Aorta (tissue), 5 donors: ENCODE measurements at regions of chr13 and their contacts with region 1.

Region 1: GRCh38 chr13:49436890-49437289 is 7.0 kb downstream of the CAB39L start:
- DNase-seq: peak; percentile 70 to 76
- ATAC-seq: peak; percentile 85
- H3K4me3 ChIP-seq: no peak overlapping the region
- H3K27ac ChIP-seq: no peak overlapping the region
- H3K4me1 ChIP-seq: no peaks in the 10 kb centered on the region
- H3K27me3 ChIP-seq: no peaks in the 10 kb centered on the region

Region 2: GRCh38 chr13:49300739-49301589 is 135.9 kb before region 1 on chr13:
- intact Hi-C with region 1: loop called (anchors 1 to 2 kb)
- DNase-seq: peak in 1 of 2 donors; percentile 65
- ATAC-seq: peak; percentile 85
- H3K4me3 ChIP-seq: no peak overlapping the region
- H3K27ac ChIP-seq: no peak overlapping the region
- H3K4me1 ChIP-seq: no peaks in the 10 kb centered on the region
- H3K27me3 ChIP-seq: no peaks in the 10 kb centered on the region

Region 3: GRCh38 chr13:49308089-49308875 is 128.6 kb before region 1 on chr13:
- intact Hi-C with region 1: loop called in 1 of 2 experiments (anchors 2 kb)
- DNase-seq: peak; percentile 88 to 90
- ATAC-seq: peak; percentile 91
- H3K4me3 ChIP-seq: no peak overlapping the region
- H3K27ac ChIP-seq: peak overlapping the region; percentile 75 to 80
- H3K4me1 ChIP-seq: peaks cover 0 to 2% of the 10 kb centered on the region in 2 donors
- H3K27me3 ChIP-seq: no peaks in the 10 kb centered on the region